Heart right ventricle (tissue), 16 donors: ENCODE measurements at regions of chr15 and their contacts with region 1.

Region 1: DNA sequence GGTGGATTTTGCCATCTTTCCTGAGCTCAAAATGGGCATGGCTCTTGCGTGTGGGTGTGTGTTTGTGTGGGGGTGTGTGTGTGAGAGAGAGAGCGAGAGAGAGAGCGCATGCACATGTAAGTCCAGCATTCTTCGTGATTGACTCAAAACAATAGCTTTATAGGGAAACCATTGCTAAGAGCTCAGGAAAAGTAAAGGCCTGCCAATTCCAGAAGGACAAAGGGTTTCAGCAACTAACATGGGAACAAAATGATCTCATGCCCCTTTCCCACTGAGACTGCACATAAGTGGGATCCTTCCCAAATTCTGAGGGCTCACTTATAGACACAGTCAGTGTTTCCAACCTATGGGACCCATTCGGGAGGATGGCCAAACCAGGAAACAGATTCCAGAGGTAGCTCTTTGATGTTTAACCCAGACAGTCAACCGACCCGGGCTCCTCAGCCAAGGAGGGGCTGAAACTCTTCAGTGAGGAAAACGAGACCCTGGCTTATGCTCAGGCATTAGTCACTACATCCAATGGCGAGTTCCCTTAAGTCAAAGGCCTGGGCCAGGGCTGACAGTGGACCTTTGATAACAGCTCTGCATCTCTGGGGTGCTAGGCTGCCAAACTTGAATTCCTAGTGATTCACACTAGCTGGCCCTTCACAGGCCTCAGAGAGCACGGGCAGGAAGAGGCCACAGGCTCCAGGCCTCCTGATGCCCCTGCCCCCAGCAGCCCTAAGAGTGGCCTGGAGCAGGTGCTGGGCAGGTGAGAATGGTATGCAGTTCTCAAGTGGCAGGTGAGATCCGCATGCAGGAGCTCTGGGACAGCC is 305.0 kb upstream of the C2CD4B start:
- DNase-seq: peak; percentile 40 to 45
- ATAC-seq: peak; percentile 20 to 86 (median 62)
- H3K4me3 ChIP-seq: no peak overlapping the region
- H3K27ac ChIP-seq: peak overlapping the region; percentile 53 to 85 (median 72)
- H3K4me1 ChIP-seq: peaks cover 12 to 82% (median 60%) of the 10 kb centered on the region in 9 donors
- H3K27me3 ChIP-seq: no peaks in the 10 kb centered on the region
- CTCF ChIP-seq: no peak

Region 2: DNA sequence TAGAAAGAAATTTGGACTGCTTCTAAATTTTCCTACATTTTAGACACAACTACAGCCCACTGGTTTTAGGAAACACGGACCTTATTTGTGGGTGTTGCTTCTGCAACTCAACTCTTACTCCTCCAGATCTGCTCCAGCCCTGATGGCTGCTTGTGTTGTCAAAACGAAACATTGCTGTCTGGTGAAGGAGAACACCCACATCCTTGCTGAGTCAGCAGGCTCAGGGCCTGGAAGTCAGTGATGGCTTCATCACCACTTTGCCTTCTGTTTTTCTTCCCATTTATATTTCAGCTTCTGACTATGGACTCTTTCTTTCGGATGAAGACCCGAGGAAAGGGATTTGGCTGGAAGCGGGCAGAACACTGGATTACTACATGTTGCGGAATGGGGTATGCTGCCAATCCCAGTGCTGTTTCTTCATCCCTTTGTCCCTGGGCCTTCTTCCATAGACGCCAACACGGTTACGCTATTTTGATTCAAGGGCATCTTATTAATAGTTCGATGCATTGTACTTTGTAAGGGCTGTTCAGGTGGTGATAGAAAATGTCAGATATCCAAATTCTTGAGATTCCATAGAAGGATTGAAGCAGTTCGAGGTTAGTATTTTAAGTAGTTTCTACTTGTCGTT is 179.8 kb after region 1 on chr15:
- intact Hi-C with region 1: loop called in 1 of 10 experiments (anchors 10 kb)
- DNase-seq: peak in 1 of 2 donors; percentile 49
- ATAC-seq: peak in 7 of 8 donors; percentile 21 to 81 (median 74)
- H3K4me3 ChIP-seq: no peak overlapping the region
- H3K27ac ChIP-seq: peak overlapping the region in 7 of 10 donors; percentile 14 to 83 (median 37)
- H3K4me1 ChIP-seq: peaks cover 0 to 32% (median 8%) of the 10 kb centered on the region in 9 donors
- H3K27me3 ChIP-seq: no peaks in the 10 kb centered on the region
- CTCF ChIP-seq: no peak